ENCODE measurements at regions of chr11 and their contacts with region 1.

Region 1: GRCh38 chr11:110505528-110506284 is 76.0 kb downstream of the FDX1 start:
- DNase-seq: no peak
- H3K4me3 ChIP-seq: no peak overlapping the region
- H3K27ac ChIP-seq: no peak overlapping the region
- H3K4me1 ChIP-seq: no peaks in the 10 kb centered on the region
- H3K27me3 ChIP-seq: no peaks in the 10 kb centered on the region
- CTCF ChIP-seq: no peak
- POLR2A ChIP-seq: no peak

Region 2: GRCh38 chr11:110287537-110287936 is 218.2 kb before region 1 on chr11:
- intact Hi-C with region 1: no loop called
- DNase-seq: no peak
- H3K4me3 ChIP-seq: no peak overlapping the region
- H3K27ac ChIP-seq: no peak overlapping the region
- H3K4me1 ChIP-seq: peaks cover 5 to 61% (median 22%) of the 10 kb centered on the region in 6 donors
- H3K27me3 ChIP-seq: no peaks in the 10 kb centered on the region
- CTCF ChIP-seq: no peak
- POLR2A ChIP-seq: no peak

Region 3: GRCh38 chr11:110573411-110573810 is 67.7 kb after region 1 on chr11:
- intact Hi-C with region 1: loop called (anchors 10 kb)
- DNase-seq: no peak
- H3K4me3 ChIP-seq: no peak overlapping the region
- H3K27ac ChIP-seq: no peak overlapping the region
- H3K4me1 ChIP-seq: no peaks in the 10 kb centered on the region
- H3K27me3 ChIP-seq: no peaks in the 10 kb centered on the region
- CTCF ChIP-seq: no peak
- POLR2A ChIP-seq: no peak

Region 4: GRCh38 chr11:111001986-111002611 is 496.4 kb after region 1 on chr11:
- intact Hi-C with region 1: no loop called
- DNase-seq: no peak
- H3K4me3 ChIP-seq: no peak overlapping the region
- H3K27ac ChIP-seq: no peak overlapping the region
- H3K4me1 ChIP-seq: peaks cover 0 to 11% (median 6%) of the 10 kb centered on the region in 6 donors
- H3K27me3 ChIP-seq: no peaks in the 10 kb centered on the region
- CTCF ChIP-seq: no peak
- POLR2A ChIP-seq: no peak

Measured in spleen (tissue), 13 donors.